ENCODE measurements at regions of chrX and their contacts with region 1.

Region 1: GRCh38 chrX:147803948-147804347 is 107.8 kb upstream of the FMR1 start:
- DNase-seq: peak; percentile 54
- H3K4me3 Mint-ChIP-seq: no peak overlapping the region
- H3K27ac Mint-ChIP-seq: peak overlapping the region; percentile 16
- H3K4me1 Mint-ChIP-seq: no peaks in the 10 kb centered on the region
- H3K27me3 Mint-ChIP-seq: no peaks in the 10 kb centered on the region
- CTCF ChIP-seq: peak; percentile 39

Region 2: GRCh38 chrX:147364896-147365295 is 439.1 kb before region 1 on chrX:
- CTCF ChIA-PET with region 1: no interaction called
- POLR2A ChIA-PET with region 1: no interaction called
- intact Hi-C with region 1: no loop called
- DNase-seq: no peak
- H3K4me3 Mint-ChIP-seq: no peak overlapping the region
- H3K27ac Mint-ChIP-seq: no peak overlapping the region
- H3K4me1 Mint-ChIP-seq: no peaks in the 10 kb centered on the region
- H3K27me3 Mint-ChIP-seq: no peaks in the 10 kb centered on the region
- CTCF ChIP-seq: no peak

Region 3: GRCh38 chrX:147570483-147570882 is 233.5 kb before region 1 on chrX:
- CTCF ChIA-PET with region 1: no interaction called
- POLR2A ChIA-PET with region 1: no interaction called
- intact Hi-C with region 1: loop called (anchors 10 kb)
- DNase-seq: peak; percentile 12
- H3K4me3 Mint-ChIP-seq: no peak overlapping the region
- H3K27ac Mint-ChIP-seq: no peak overlapping the region
- H3K4me1 Mint-ChIP-seq: peaks cover 4% of the 10 kb centered on the region
- H3K27me3 Mint-ChIP-seq: no peaks in the 10 kb centered on the region
- CTCF ChIP-seq: peak; percentile 15